ENCODE measurements at regions of chr17 and their contacts with region 1.

Region 1: DNA sequence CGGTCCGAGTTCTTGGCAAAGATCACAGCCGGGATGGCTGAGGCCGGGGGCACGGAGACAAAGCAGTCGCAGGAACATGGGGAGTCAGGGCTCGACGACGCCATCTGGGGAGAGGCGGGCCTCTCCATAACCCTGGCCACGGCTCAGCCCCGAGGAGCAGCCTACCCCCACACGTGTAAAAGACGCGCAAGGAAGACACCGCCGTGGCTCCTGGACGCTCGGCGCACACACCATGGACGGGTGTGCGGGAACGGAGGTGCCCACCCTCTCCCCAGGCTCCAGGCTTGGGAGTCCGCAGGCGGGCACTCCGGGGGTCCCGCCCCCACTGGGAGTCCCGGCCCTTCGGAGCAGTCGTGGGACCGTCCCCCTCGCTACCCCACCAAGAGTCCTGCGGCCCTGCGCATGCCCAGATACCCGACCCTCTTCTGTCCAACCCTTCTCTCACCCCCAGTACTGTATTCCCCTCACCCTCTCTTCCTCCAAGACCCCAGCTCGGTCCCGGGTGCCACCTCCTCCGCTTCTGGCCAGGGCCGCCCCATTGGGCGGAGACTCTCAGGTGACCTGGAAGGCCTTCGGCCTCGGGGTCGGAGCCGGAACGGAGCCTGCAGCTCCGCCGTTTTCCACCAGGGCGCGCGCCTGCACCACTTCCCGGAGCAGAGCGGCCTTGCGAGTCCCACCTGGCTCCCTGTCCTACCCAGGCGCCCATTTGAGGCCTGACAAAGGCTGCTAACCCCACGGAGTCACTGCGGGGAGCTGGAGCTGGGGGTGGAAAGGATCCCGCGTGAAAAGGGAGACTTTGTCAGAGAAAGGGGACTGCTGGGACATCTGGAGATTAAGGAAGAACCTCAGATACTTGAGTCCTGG is at the start of gene SCRN2:
- DNase-seq: peak; percentile 87
- H3K4me3 Mint-ChIP-seq: peak within 1 kb of the TSS; percentile 94
- H3K27ac Mint-ChIP-seq: peak within 1 kb of the TSS; percentile 88
- H3K4me1 Mint-ChIP-seq: peaks cover 22% of the 10 kb centered on the region
- H3K27me3 Mint-ChIP-seq: peaks cover 19% of the 10 kb centered on the region
- total RNA-seq, gene SCRN2: 23.5 and 27.5 TPM in 2 replicates

Region 2: GRCh38 chr17:47889734-47890529 is 49.0 kb after region 1 on chr17:
- intact Hi-C with region 1: loop called (anchors 1 kb)
- DNase-seq: peak; percentile 80
- H3K4me3 Mint-ChIP-seq: no peak overlapping the region
- H3K27ac Mint-ChIP-seq: no peak overlapping the region
- H3K4me1 Mint-ChIP-seq: peaks cover 13% of the 10 kb centered on the region
- H3K27me3 Mint-ChIP-seq: no peaks in the 10 kb centered on the region

Region 3: GRCh38 chr17:47970704-47971463 is 129.9 kb after region 1 on chr17 and contains the start of gene CDK5RAP3:
- intact Hi-C with region 1: loop called (anchors 1 kb)
- DNase-seq: peak; percentile 99
- H3K4me3 Mint-ChIP-seq: peak within 1 kb of the TSS; percentile 95
- H3K27ac Mint-ChIP-seq: peak within 1 kb of the TSS; percentile 91
- H3K4me1 Mint-ChIP-seq: peaks cover 28% of the 10 kb centered on the region
- H3K27me3 Mint-ChIP-seq: peaks cover 1% of the 10 kb centered on the region
- total RNA-seq, gene CDK5RAP3: 192 and 199 TPM in 2 replicates

Measured in activated T-helper 2 cell treated with anti-CD3 and anti-CD28 coated beads, Interferon-gamma antibody, Interleukin-2, Interleukin-4, amounts not matched to agents 10 μg/mL and 5 μg/mL and 100 μg/mL, durations not matched to agents 14 hours and 24 hours and 36 hours (primary cell).